BJ (cell line): ENCODE measurements at regions of chr3 and their contacts with region 1.

Region 1: GRCh38 chr3:69120879-69121464 is 1.4 kb downstream of the LMOD3 start:
- DNase-seq: no peak
- H3K4me3 ChIP-seq: no peak overlapping the region
- H3K27me3 ChIP-seq: no peaks in the 10 kb centered on the region; the same call in 1 of the 2 replicates
- CTCF ChIP-seq: peak; percentile 96

Region 2: GRCh38 chr3:68515237-68515636 is 605.7 kb before region 1 on chr3:
- CTCF ChIA-PET with region 1: no interaction called
- POLR2A ChIA-PET with region 1: no interaction called
- DNase-seq: no peak
- H3K4me3 ChIP-seq: no peak overlapping the region
- H3K27me3 ChIP-seq: no peaks in the 10 kb centered on the region
- CTCF ChIP-seq: no peak

Region 3: GRCh38 chr3:69084326-69085167 is 36.4 kb before region 1 on chr3 and contains the start of gene ARL6IP5:
- CTCF ChIA-PET with region 1: interaction called, 19 read pairs
- POLR2A ChIA-PET with region 1: no interaction called
- DNase-seq: no peak
- H3K4me3 ChIP-seq: peak within 1 kb of the TSS; percentile 83
- H3K27me3 ChIP-seq: no peaks in the 10 kb centered on the region
- CTCF ChIP-seq: no peak
- polyA plus RNA-seq, gene ARL6IP5: 129 TPM in 2 replicates

Region 4: DNA sequence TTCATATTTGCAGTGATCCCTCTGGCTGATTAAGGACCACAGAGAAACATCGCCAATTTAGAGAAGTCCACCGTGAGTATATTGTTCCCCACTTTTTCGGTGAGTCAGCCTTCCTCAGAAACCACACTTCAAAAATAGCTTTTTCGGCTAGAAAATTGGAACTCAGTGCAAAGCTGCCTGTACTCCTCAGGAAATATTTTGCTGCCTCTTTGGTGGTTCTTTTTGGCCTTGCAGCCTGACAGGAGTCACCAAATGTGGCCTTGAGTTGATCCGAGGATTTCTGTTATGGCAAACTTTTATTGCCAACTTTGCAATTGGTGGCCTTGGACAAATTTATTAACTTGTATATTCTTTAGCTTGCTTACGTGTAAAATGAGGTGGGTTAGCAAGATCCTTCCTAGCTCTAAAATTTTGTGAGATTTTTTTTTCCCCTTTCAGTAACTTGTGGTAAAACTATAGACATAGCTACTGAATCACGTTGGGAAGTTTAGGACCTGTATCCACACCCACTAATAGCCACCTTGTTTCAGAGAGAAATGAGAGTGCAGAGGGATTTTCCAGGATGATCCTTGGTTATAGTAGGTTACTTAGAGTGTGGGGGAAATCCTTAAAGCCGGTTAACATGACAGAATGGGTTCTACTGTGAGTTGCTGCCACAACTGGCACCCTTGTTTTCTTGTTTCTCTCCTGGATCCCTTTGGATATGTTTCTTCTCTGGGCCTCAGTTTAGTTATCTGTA is 26.3 kb before region 1 on chr3:
- CTCF ChIA-PET with region 1: interaction called, 10 read pairs
- POLR2A ChIA-PET with region 1: no interaction called
- DNase-seq: no peak
- H3K4me3 ChIP-seq: no peak overlapping the region
- H3K27me3 ChIP-seq: no peaks in the 10 kb centered on the region
- CTCF ChIP-seq: no peak

Region 5: GRCh38 chr3:69137011-69137410 is 16.0 kb after region 1 on chr3:
- CTCF ChIA-PET with region 1: interaction called, 13 read pairs
- POLR2A ChIA-PET with region 1: no interaction called
- DNase-seq: no peak
- H3K4me3 ChIP-seq: no peak overlapping the region
- H3K27me3 ChIP-seq: no peaks in the 10 kb centered on the region
- CTCF ChIP-seq: no peak